ENCODE measurements at regions of chr12 and their contacts with region 1.

Region 1: GRCh38 chr12:65169320-65170208 is at the start of gene LEMD3:
- DNase-seq: peak; percentile 96
- H3K4me3 Mint-ChIP-seq: peak within 1 kb of the TSS; percentile 100
- H3K27ac Mint-ChIP-seq: peak within 1 kb of the TSS; percentile 98
- H3K4me1 Mint-ChIP-seq: peaks cover 11% of the 10 kb centered on the region
- H3K27me3 Mint-ChIP-seq: no peaks in the 10 kb centered on the region
- CTCF ChIP-seq: no peak
- total RNA-seq, gene LEMD3: 21.8 and 27.7 TPM in 2 replicates

Region 2: GRCh38 chr12:65188179-65188701 is 18.7 kb after region 1 on chr12:
- CTCF ChIA-PET with region 1: interaction called, 3 read pairs
- POLR2A ChIA-PET with region 1: interaction called, 37 read pairs
- intact Hi-C with region 1: no loop called
- DNase-seq: no peak
- H3K4me3 Mint-ChIP-seq: no peak overlapping the region
- H3K27ac Mint-ChIP-seq: no peak overlapping the region
- H3K4me1 Mint-ChIP-seq: peaks cover 22% of the 10 kb centered on the region
- H3K27me3 Mint-ChIP-seq: no peaks in the 10 kb centered on the region
- CTCF ChIP-seq: no peak

Region 3: GRCh38 chr12:65209655-65210043 is 40.1 kb after region 1 on chr12:
- CTCF ChIA-PET with region 1: no interaction called
- POLR2A ChIA-PET with region 1: interaction called, 12 read pairs
- intact Hi-C with region 1: no loop called
- DNase-seq: no peak
- H3K4me3 Mint-ChIP-seq: no peak overlapping the region
- H3K27ac Mint-ChIP-seq: no peak overlapping the region
- H3K4me1 Mint-ChIP-seq: no peaks in the 10 kb centered on the region
- H3K27me3 Mint-ChIP-seq: no peaks in the 10 kb centered on the region
- CTCF ChIP-seq: no peak

Region 4: DNA sequence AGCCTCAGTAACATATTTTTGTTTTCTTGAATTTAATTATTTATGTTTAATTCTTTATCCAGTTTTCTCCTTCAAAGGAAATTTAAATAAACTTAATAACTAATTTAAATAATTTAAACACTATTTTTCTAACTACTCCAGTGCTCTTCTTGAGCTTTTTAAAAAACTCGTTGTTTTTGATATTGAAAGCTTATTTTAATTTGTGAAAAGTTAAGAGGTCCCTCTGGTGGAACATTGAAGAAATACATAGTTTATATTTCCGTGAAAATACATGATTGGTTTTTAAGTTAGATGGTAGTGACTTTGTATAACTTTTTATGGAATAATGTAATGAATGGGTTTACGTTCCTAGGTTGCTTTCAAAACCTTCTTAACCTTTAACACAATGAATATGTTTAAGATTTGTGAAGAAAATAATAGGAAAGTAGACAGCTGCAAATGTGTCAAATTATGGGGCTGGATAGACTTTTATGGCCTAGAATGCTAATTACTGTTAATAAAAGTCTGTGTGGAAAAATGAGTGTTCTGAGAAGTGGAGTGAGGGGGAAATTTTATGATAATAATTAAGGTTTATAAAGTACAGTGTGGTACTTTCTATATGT is 63.0 kb after region 1 on chr12:
- CTCF ChIA-PET with region 1: interaction called, 35 read pairs
- POLR2A ChIA-PET with region 1: interaction called, 58 read pairs
- intact Hi-C with region 1: loop called (anchors 2 kb)
- DNase-seq: peak; percentile 28
- H3K4me3 Mint-ChIP-seq: no peak overlapping the region
- H3K27ac Mint-ChIP-seq: peak overlapping the region; percentile 29
- H3K4me1 Mint-ChIP-seq: peaks cover 17% of the 10 kb centered on the region
- H3K27me3 Mint-ChIP-seq: no peaks in the 10 kb centered on the region
- CTCF ChIP-seq: peak; percentile 29

Region 5: DNA sequence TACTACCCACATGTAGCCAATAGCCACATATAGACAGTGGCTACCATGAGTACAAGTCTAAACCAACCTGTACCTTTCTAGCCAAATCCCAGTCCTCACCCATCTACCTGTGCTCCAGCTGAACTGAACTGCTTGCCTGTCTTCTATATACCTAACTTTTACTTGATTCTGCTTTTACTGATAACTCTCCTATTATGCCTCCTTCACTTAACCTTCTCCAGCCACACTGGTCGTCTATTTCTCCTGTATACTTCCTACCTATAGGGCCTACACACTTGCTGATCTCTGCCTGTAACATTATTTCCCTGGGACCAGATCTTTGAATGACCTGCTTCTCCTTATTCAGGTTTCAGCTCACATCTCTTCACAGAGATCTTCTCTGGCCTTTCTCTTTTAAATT is 83.0 kb after region 1 on chr12:
- CTCF ChIA-PET with region 1: no interaction called
- POLR2A ChIA-PET with region 1: no interaction called
- intact Hi-C with region 1: no loop called
- DNase-seq: no peak
- H3K4me3 Mint-ChIP-seq: no peak overlapping the region
- H3K27ac Mint-ChIP-seq: no peak overlapping the region
- H3K4me1 Mint-ChIP-seq: no peaks in the 10 kb centered on the region
- H3K27me3 Mint-ChIP-seq: no peaks in the 10 kb centered on the region
- CTCF ChIP-seq: no peak

Measured in MCF 10A (cell line).